ENCODE measurements at regions of chr9 and their contacts with region 1.

Region 1: DNA sequence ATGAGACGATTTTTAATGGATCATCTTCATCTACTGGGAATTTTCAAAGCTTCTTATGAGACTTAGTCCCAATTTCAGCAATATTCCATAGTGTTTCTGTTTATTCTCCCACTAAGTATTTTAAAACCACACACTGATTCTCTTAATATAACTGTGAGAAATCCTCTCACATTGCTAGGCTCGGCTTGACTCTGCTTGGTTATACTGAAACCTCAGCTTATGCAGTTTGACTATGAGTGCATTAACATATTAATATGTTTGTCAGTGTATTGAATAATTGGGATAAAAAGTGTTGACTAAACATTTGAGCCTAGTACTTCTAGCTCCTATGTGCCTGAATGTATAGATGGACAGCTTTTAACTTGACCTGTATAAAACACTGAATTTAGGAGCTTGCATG is 298.5 kb upstream of the IZUMO3 start:
- DNase-seq: no peak
- H3K4me3 ChIP-seq: no peak overlapping the region
- H3K27ac ChIP-seq: no peak overlapping the region
- H3K4me1 ChIP-seq: no peaks in the 10 kb centered on the region
- H3K27me3 ChIP-seq: no peaks in the 10 kb centered on the region
- CTCF ChIP-seq: no peak
- EP300 ChIP-seq: no peak
- POLR2A ChIP-seq: no peak
- RAD21 ChIP-seq: no peak

Region 2: GRCh38 chr9:24832308-24832707 is 11.9 kb before region 1 on chr9:
- CTCF ChIA-PET with region 1: interaction called, 13 read pairs
- POLR2A ChIA-PET with region 1: no interaction called
- DNase-seq: peak in 1 of 2 experiments; percentile 49
- H3K4me3 ChIP-seq: no peak overlapping the region
- H3K27ac ChIP-seq: no peak overlapping the region
- H3K4me1 ChIP-seq: peaks cover 0 to 2% (median 0%) of the 10 kb centered on the region in 4 experiments; a peak in 1 of 7 replicates
- H3K27me3 ChIP-seq: no peaks in the 10 kb centered on the region
- CTCF ChIP-seq: peak in 2 of 3 experiments; percentile 40 to 48; a peak in 3 of 4 replicates
- EP300 ChIP-seq: no peak
- POLR2A ChIP-seq: no peak
- RAD21 ChIP-seq: peak; percentile 45 to 63